ENCODE measurements at regions of chr1 and their contacts with region 1.

Region 1: GRCh38 chr1:20640183-20640597 is 6.9 kb downstream of the PINK1 start:
- DNase-seq: peak in 1 of 2 experiments; percentile 62
- H3K4me3 ChIP-seq: no peak overlapping the region
- H3K4me3 Mint-ChIP-seq: no peak overlapping the region
- H3K27ac Mint-ChIP-seq: no peak overlapping the region
- H3K4me1 ChIP-seq: no peaks in the 10 kb centered on the region
- H3K4me1 Mint-ChIP-seq: no peaks in the 10 kb centered on the region
- H3K27me3 ChIP-seq: no peaks in the 10 kb centered on the region
- H3K27me3 Mint-ChIP-seq: no peaks in the 10 kb centered on the region
- CTCF ChIP-seq: peak; percentile 71 to 72

Region 2: DNA sequence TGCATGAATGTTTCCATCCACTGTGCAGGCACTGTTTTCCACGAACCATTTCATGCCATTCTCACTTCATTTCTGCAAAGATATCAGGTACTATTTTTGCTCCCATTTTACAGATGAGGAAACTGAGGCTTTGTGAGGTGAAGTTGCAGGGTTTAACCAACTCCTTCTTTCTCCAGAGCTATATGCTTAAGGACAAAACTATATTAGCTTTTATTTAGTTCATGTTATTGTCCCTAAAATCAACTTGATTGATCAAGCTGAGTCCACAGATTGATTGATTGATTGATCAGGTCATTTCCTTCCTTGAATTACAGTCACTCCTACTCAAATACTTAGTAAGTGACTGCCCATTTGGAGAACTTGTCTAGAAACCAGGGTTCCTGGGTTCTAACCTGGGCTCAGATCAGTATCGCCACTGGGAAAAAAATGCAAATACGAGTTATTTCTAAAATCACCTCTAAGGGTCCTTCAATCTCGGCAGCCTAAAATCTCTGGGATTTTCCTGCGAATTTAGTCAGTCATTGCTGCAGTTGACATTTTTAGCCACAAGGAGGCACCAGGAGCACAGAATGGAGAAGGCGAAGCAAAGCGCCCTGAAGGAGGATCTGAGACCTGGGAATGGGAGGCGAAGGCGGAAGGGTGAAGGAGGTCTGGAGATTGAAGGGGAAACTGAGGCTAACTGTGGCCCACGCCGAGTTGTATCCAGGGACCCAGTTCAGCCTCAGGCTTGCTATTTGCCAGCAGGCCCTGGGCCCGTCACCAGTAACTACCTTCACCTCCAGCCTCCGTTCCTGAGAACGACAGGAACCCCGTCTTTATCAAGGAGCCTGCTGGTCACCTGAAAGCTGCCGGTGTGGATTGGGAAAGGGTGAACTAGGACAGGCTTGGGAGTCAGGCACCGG is 118.0 kb before region 1 on chr1:
- CTCF ChIA-PET with region 1: no interaction called
- POLR2A ChIA-PET with region 1: no interaction called
- intact Hi-C with region 1: loop called (anchors 1 kb)
- DNase-seq: peak; percentile 74 to 84
- H3K4me3 ChIP-seq: no peak overlapping the region
- H3K4me3 Mint-ChIP-seq: no peak overlapping the region
- H3K27ac Mint-ChIP-seq: no peak overlapping the region
- H3K4me1 ChIP-seq: no peaks in the 10 kb centered on the region
- H3K4me1 Mint-ChIP-seq: no peaks in the 10 kb centered on the region
- H3K27me3 ChIP-seq: no peaks in the 10 kb centered on the region
- H3K27me3 Mint-ChIP-seq: no peaks in the 10 kb centered on the region
- CTCF ChIP-seq: peak; percentile 80 to 82

Region 3: GRCh38 chr1:20574686-20575540 is 65.3 kb before region 1 on chr1:
- CTCF ChIA-PET with region 1: interaction called, 41 read pairs
- POLR2A ChIA-PET with region 1: interaction called, 3 read pairs
- intact Hi-C with region 1: loop called (anchors 1 kb)
- DNase-seq: peak; percentile 59 to 75
- H3K4me3 ChIP-seq: no peak overlapping the region
- H3K4me3 Mint-ChIP-seq: no peak overlapping the region
- H3K27ac Mint-ChIP-seq: no peak overlapping the region
- H3K4me1 ChIP-seq: no peaks in the 10 kb centered on the region
- H3K4me1 Mint-ChIP-seq: no peaks in the 10 kb centered on the region
- H3K27me3 ChIP-seq: no peaks in the 10 kb centered on the region
- H3K27me3 Mint-ChIP-seq: no peaks in the 10 kb centered on the region
- CTCF ChIP-seq: peak; percentile 54 to 65

Region 4: DNA sequence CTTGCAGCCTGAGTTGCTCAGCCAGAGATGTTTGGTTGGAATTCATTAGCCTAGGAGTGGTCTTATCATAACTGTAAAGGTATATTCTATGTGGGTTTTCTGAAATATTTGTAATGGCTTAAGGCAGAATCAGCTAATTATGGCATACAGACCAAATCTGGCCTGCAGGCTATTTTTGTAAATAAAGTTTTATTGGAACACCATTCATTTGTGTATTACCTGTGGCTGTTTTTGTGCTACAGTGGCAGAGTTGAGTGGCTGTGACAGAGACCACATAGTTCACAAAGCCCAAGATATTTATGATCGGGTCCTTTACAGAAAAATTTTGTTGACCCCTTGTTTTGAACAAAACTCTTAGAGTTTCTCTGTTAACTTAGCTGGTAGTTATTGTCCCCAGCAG is 28.4 kb after region 1 on chr1:
- CTCF ChIA-PET with region 1: no interaction called
- POLR2A ChIA-PET with region 1: no interaction called
- intact Hi-C with region 1: no loop called
- DNase-seq: no peak
- H3K4me3 ChIP-seq: no peak overlapping the region
- H3K4me3 Mint-ChIP-seq: no peak overlapping the region
- H3K27ac Mint-ChIP-seq: no peak overlapping the region
- H3K4me1 ChIP-seq: no peaks in the 10 kb centered on the region
- H3K4me1 Mint-ChIP-seq: no peaks in the 10 kb centered on the region
- H3K27me3 ChIP-seq: no peaks in the 10 kb centered on the region
- H3K27me3 Mint-ChIP-seq: no peaks in the 10 kb centered on the region
- CTCF ChIP-seq: no peak

Region 5: GRCh38 chr1:20682571-20683236 is 42.5 kb after region 1 on chr1:
- CTCF ChIA-PET with region 1: no interaction called
- POLR2A ChIA-PET with region 1: no interaction called
- intact Hi-C with region 1: no loop called
- DNase-seq: no peak
- H3K4me3 ChIP-seq: no peak overlapping the region
- H3K4me3 Mint-ChIP-seq: no peak overlapping the region
- H3K27ac Mint-ChIP-seq: no peak overlapping the region
- H3K4me1 ChIP-seq: no peaks in the 10 kb centered on the region
- H3K4me1 Mint-ChIP-seq: no peaks in the 10 kb centered on the region
- H3K27me3 ChIP-seq: no peaks in the 10 kb centered on the region
- H3K27me3 Mint-ChIP-seq: no peaks in the 10 kb centered on the region
- CTCF ChIP-seq: no peak

Region 6: DNA sequence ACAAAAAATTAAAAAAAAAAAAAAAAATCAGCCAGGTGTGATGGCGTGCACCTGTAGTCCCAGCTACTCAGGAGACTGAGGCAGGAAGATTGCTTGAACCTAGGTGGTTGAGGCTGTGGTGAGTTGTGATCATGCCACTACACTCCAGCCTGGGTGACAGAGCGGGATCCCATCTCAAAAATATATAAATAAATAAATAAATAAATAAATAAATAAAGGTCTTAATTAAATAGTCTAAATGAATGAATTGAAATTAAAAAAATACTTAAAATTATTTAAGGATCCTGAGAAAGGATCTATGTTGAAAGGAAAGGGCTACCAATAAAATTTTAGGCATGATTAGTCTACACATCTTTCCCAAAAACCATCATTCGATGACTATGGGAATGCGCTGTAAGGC is 214.3 kb after region 1 on chr1:
- CTCF ChIA-PET with region 1: no interaction called
- POLR2A ChIA-PET with region 1: no interaction called
- intact Hi-C with region 1: no loop called
- DNase-seq: no peak
- H3K4me3 ChIP-seq: no peak overlapping the region
- H3K4me3 Mint-ChIP-seq: no peak overlapping the region
- H3K27ac Mint-ChIP-seq: no peak overlapping the region
- H3K4me1 ChIP-seq: no peaks in the 10 kb centered on the region
- H3K4me1 Mint-ChIP-seq: no peaks in the 10 kb centered on the region
- H3K27me3 ChIP-seq: no peaks in the 10 kb centered on the region
- H3K27me3 Mint-ChIP-seq: no peaks in the 10 kb centered on the region
- CTCF ChIP-seq: no peak

Region 7: DNA sequence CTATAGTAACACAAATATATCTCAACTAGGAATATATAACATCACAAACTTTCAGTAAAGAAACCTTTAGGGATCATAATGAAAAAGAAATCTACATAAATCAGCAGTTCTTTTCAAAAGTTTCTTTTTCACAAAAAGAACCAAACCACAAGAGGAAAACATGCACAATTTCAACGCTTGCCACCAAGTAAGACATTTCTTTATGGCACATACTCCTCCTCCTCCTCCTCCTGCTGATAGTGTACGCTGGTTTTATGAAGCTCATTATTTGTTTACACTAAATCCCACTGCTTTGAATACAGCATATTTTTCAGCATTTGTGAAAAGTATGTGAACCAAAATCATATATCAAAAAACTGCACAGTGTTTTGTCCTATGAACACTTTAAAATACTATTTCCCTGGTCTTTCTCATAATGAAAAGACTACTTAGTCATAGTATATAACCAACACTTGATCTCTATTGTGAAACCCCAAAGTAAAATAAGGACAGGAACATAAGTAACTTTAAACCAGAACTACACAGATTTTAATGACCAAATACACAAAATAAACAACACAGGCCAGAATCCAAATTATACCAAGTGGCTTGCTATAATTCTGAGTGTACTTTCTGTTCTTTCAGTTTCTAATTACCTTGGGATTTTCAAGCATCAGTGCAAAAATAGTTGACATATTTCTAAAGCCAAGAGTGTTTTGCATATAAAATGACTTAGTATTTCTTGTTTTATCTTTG is 352.3 kb after region 1 on chr1:
- CTCF ChIA-PET with region 1: no interaction called
- POLR2A ChIA-PET with region 1: no interaction called
- intact Hi-C with region 1: no loop called
- DNase-seq: no peak
- H3K4me3 ChIP-seq: no peak overlapping the region
- H3K4me3 Mint-ChIP-seq: no peak overlapping the region
- H3K27ac Mint-ChIP-seq: no peak overlapping the region
- H3K4me1 ChIP-seq: no peaks in the 10 kb centered on the region
- H3K4me1 Mint-ChIP-seq: peaks cover 10% of the 10 kb centered on the region
- H3K27me3 ChIP-seq: no peaks in the 10 kb centered on the region
- H3K27me3 Mint-ChIP-seq: no peaks in the 10 kb centered on the region
- CTCF ChIP-seq: no peak